ENCODE measurements at regions of chr7 and their contacts with region 1.

Region 1: DNA sequence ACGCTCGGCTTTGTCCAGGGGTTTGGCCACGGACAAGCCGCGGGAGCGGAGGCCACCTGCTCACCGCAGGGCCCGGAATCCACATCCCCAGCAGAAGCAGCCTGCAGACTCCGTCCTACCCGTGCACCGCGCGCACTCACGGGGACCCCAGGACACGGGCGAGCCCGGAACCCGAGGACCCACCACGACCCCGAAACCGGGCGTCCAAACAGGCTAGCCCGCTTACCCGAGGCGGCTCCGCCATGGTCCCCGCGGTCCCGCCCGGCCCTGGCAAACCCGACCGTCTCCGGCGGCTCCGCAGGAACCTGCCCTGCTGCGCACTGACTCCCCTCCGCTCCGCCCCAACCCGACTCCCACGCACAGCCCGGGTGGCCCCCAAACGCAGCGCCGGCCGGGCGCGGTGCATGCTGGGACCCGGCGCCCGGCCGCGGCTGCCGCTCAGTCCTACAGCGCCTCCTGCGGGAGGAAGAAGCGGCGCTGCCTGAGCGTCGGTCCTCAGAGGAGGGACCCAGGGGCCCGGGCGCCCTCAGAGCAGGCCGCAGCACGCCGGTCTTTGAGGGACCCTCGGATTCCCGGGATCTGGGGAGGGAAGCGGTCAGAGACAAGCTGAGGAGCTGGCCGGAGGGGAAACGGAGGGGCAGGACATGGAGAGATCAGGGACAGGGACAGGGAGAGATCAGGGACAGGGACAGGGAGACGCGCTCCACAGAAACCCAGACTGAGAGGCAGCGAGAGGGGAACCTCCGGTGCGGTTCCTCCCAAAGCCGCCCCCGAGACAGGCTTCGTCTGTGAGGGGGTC is at the start of gene ZNF786:
- DNase-seq: peak; percentile 89 to 91 (median 91)
- H3K4me3 ChIP-seq: peak within 1 kb of the TSS; percentile 76 to 99
- H3K4me3 Mint-ChIP-seq: peak within 1 kb of the TSS; percentile 95 to 100 (median 99)
- H3K27ac ChIP-seq: peak within 1 kb of the TSS; percentile 88
- H3K27ac Mint-ChIP-seq: peak within 1 kb of the TSS; percentile 88 to 100 (median 99)
- H3K4me1 ChIP-seq: peaks cover 14% of the 10 kb centered on the region
- H3K4me1 Mint-ChIP-seq: peaks cover 13 to 36% (median 18%) of the 10 kb centered on the region in 4 donors
- H3K27me3 ChIP-seq: no peaks in the 10 kb centered on the region
- H3K27me3 Mint-ChIP-seq: no peaks in the 10 kb centered on the region
- total RNA-seq, gene ZNF786: 18.6 to 18.8 TPM

Region 2: GRCh38 chr7:148884299-148885022 is 206.1 kb before region 1 on chr7:
- CTCF ChIA-PET with region 1: no interaction called
- POLR2A ChIA-PET with region 1: no interaction called
- intact Hi-C with region 1: loop called (anchors 1 kb)
- DNase-seq: peak; percentile 91 to 96 (median 94)
- H3K4me3 ChIP-seq: peak overlapping the region in 1 of 2 donors; percentile 84
- H3K4me3 Mint-ChIP-seq: peak overlapping the region; percentile 90 to 97 (median 94)
- H3K27ac ChIP-seq: peak overlapping the region; percentile 79
- H3K27ac Mint-ChIP-seq: peak overlapping the region; percentile 89 to 96 (median 92)
- H3K4me1 ChIP-seq: peaks cover 31% of the 10 kb centered on the region
- H3K4me1 Mint-ChIP-seq: peaks cover 12 to 38% (median 24%) of the 10 kb centered on the region in 4 donors
- H3K27me3 ChIP-seq: no peaks in the 10 kb centered on the region
- H3K27me3 Mint-ChIP-seq: no peaks in the 10 kb centered on the region

Region 3: DNA sequence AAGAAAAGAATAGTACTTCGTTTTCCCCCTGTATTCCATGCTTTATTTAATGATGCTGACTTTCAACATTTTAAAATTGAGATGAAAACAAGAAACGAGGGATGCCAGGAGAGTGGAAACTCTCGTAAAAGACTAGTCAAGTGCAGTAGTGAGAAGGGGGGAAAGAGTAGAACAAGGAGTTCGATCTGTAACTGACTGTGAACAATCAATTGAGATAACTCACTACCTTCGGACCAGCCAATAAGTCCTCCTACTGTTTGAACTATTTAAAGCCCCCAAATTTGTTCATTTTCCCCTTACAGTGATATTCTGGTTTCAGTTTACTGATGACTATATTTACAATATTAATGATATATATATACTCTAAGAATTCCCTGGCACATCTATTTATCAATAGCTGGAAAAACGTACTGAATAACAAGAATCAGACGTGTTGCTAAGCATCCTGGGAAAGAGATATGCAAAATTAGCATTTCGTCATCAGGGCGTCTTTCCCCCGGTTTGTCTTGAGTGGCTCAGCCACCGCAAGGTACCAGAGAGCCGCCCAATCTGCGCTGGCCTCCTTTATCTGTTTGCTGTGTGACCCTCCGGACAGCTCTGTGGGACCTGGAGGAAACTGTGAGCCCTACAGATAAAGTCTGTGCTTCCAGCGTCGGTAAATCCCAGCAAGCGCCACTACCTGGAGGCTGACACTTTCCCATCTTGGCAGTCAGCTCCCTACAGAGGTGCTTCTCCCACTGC is 103.4 kb before region 1 on chr7:
- CTCF ChIA-PET with region 1: interaction called, 3 read pairs
- POLR2A ChIA-PET with region 1: interaction called, 3 read pairs
- intact Hi-C with region 1: loop called (anchors 1 kb)
- DNase-seq: peak; percentile 89 to 91 (median 90)
- H3K4me3 ChIP-seq: peak overlapping the region; percentile 95 to 98
- H3K4me3 Mint-ChIP-seq: peak overlapping the region; percentile 93 to 99 (median 98)
- H3K27ac ChIP-seq: peak overlapping the region; percentile 83
- H3K27ac Mint-ChIP-seq: peak overlapping the region; percentile 96 to 100 (median 98)
- H3K4me1 ChIP-seq: peaks cover 46% of the 10 kb centered on the region
- H3K4me1 Mint-ChIP-seq: peaks cover 27 to 59% (median 45%) of the 10 kb centered on the region in 4 donors
- H3K27me3 ChIP-seq: no peaks in the 10 kb centered on the region
- H3K27me3 Mint-ChIP-seq: peaks cover 2 to 5% of the 10 kb centered on the region in 2 donors

Region 4: DNA sequence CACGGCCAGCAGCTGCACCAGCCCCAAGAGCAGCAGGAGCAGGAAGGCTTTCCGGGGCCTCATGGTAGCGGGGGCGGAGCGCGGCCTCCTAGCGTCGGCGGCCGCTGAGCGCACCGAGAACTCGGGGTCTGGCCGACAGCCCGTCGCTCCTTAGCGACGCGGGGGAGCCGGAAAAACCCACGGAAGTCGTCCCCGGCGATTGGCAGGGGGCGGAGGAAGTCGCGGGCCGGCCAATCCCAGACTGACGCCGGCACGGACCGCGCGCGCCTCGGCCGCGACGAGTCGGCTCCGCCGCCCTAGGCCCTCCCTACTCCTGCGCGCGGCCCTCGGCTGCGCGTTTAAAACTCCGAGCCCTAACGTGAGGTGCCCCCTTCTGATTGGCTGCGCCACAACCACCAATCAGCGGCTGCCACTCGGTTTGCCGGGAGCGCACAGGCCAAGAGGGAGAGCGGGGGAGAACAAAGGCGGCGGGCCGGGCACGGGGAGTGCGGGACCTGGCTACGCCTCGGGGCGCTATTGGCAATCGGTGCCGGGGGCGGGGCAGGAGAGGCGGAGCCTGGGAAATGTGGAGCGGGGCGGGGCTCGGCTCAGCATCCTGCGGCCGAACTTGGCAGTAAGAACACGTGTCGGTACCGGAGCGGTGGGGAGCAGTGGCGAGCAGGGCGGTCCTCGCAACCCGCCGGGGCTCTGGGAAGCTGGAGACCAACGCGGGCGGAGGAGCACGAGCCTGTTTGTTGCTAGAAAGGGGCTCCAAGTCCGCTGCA is 62.1 kb before region 1 on chr7 and contains the start of gene PDIA4:
- CTCF ChIA-PET with region 1: interaction called, 5 read pairs
- POLR2A ChIA-PET with region 1: interaction called, 12 read pairs
- intact Hi-C with region 1: loop called (anchors 1 kb)
- DNase-seq: peak; percentile 99
- H3K4me3 ChIP-seq: peak within 1 kb of the TSS; percentile 59 to 86
- H3K4me3 Mint-ChIP-seq: peak within 1 kb of the TSS; percentile 88 to 95 (median 92)
- H3K27ac ChIP-seq: peak within 1 kb of the TSS; percentile 88
- H3K27ac Mint-ChIP-seq: peak within 1 kb of the TSS; percentile 90 to 98 (median 94)
- H3K4me1 ChIP-seq: peaks cover 40% of the 10 kb centered on the region
- H3K4me1 Mint-ChIP-seq: peaks cover 29 to 58% (median 45%) of the 10 kb centered on the region in 4 donors
- H3K27me3 ChIP-seq: no peaks in the 10 kb centered on the region
- H3K27me3 Mint-ChIP-seq: no peaks in the 10 kb centered on the region
- total RNA-seq, gene PDIA4: 82.8 to 87.1 TPM

Region 5: GRCh38 chr7:149125863-149126661 is 35.5 kb after region 1 on chr7 and contains the start of gene ZNF425:
- CTCF ChIA-PET with region 1: interaction called, 7 read pairs
- POLR2A ChIA-PET with region 1: interaction called, 9 read pairs
- intact Hi-C with region 1: loop called (anchors 1 kb)
- DNase-seq: peak; percentile 89 to 94 (median 91)
- H3K4me3 ChIP-seq: peak within 1 kb of the TSS; percentile 83 to 96
- H3K4me3 Mint-ChIP-seq: peak within 1 kb of the TSS; percentile 91 to 100 (median 100)
- H3K27ac ChIP-seq: peak within 1 kb of the TSS; percentile 88
- H3K27ac Mint-ChIP-seq: peak within 1 kb of the TSS; percentile 91 to 99 (median 98)
- H3K4me1 ChIP-seq: peaks cover 19% of the 10 kb centered on the region
- H3K4me1 Mint-ChIP-seq: peaks cover 15 to 35% (median 25%) of the 10 kb centered on the region in 4 donors
- H3K27me3 ChIP-seq: no peaks in the 10 kb centered on the region
- H3K27me3 Mint-ChIP-seq: no peaks in the 10 kb centered on the region
- total RNA-seq, gene ZNF425: 3.2 to 4.0 TPM

Region 6: GRCh38 chr7:149584530-149584929 is 493.9 kb after region 1 on chr7:
- CTCF ChIA-PET with region 1: no interaction called
- POLR2A ChIA-PET with region 1: no interaction called
- intact Hi-C with region 1: no loop called
- DNase-seq: no peak
- H3K4me3 ChIP-seq: no peak overlapping the region
- H3K4me3 Mint-ChIP-seq: no peak overlapping the region
- H3K27ac ChIP-seq: no peak overlapping the region
- H3K27ac Mint-ChIP-seq: no peak overlapping the region
- H3K4me1 ChIP-seq: no peaks in the 10 kb centered on the region
- H3K4me1 Mint-ChIP-seq: peaks cover 13 to 21% (median 18%) of the 10 kb centered on the region in 4 donors
- H3K27me3 ChIP-seq: no peaks in the 10 kb centered on the region
- H3K27me3 Mint-ChIP-seq: no peaks in the 10 kb centered on the region